ENCODE measurements at regions of chr11 and their contacts with region 1.

Region 1: DNA sequence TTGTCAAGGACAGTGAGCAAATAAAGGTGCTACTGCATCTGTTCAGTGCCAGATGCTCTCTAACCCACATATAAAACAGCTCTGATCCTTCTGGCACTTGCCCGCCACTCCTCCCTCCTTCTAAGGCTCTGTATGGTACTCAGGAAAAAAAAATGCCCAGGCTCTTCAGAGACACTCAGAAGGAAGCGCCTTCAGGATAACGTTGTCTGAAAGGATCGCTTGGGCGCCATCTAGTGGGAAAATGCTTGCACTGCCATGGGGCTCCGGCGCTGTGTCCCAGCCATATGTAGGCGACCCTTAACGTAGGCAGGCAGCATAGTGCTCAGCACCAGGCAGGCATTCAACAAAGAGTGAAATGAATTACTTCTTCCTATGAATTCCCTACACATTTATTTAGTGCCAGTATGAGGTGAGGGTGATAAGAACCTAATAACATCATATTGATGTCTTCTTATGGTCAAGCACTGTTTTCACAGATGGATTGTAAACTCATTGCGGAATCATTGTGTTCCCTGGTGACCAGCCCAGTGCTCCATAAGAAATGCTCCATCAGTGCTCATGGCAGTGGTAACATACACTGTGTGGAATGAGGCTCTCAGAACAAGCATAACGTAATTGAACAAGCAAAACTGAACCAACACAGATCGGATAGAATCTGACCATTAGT is 39.6 kb downstream of the PAMR1 start:
- DNase-seq: peak; percentile 10 to 84
- H3K4me3 ChIP-seq: no peak overlapping the region
- H3K27ac ChIP-seq: no peak overlapping the region
- H3K4me1 ChIP-seq: no peaks in the 10 kb centered on the region
- H3K27me3 ChIP-seq: no peaks in the 10 kb centered on the region
- CTCF ChIP-seq: peak; percentile 64 to 93 (median 89)

Region 2: DNA sequence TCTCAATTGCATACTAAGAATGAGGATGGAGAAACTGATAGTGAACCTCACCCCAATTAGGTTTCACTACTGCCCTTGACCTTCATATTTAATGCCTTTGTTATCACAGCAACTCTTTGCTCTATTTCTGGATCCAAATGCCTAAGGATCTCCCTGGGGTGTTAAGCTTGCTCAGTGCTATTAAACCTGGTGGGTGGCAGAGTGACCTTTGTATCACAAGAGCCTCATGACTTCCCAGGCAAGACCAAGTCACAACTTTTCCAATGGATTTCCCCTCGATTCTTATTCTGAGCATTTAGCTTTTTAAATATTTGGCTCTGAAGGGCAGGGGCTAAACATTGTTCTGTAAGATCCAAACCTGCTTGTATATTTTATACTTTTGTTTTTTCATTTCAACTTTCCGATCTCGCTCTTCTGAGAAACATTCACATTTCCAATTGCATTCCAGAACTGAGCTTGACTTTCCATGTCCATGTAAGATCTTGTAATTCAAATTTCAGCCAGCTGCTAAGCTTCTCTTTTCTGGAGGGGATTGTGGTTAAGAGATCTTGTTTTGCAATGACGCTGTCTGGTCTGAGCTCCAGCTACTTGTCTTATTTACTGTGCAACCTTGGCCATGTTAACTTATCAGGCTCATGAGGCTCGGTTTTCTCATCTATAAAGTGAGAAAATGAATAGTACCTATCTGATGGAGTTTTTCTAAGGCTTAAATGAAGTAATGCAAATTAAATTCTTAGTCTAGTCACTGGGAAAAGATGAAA is 871.3 kb before region 1 on chr11:
- intact Hi-C with region 1: no loop called
- DNase-seq: no peak
- H3K4me3 ChIP-seq: no peak overlapping the region
- H3K27ac ChIP-seq: no peak overlapping the region
- H3K4me1 ChIP-seq: no peaks in the 10 kb centered on the region
- H3K27me3 ChIP-seq: no peaks in the 10 kb centered on the region
- CTCF ChIP-seq: no peak

Region 3: DNA sequence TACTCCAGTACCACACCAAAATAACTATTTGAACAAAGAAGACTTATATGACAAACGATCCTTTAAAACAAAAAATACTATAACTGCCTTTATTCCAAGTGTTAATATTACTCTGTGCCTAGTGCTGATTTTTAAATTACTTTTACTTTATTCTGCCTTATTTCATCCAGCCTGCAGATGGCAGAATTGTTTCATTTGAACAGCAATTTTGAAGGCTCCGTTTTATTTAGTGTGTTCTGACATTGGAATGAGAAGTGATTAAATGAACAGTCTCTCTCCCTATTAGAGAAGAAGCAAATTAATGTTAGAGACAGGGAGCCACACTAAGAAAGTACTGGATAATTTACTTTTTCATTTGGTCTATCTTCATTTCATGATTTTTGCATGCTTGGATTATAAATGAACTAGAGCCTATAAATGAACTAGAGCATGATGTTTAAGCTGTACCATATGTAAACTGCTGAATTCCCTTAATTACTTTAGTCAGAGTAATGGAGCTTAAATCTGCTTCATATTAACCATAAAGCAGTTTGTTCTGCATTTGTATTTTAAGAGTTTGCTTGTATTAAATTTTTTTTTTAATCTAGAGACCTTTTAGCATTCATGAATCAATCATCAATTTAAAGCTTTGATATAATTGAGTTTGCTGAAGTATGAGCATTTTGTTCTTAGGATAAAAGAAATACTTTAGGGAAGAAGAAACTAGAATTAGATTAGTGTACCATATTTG is 559.5 kb before region 1 on chr11:
- intact Hi-C with region 1: loop called (anchors 1 kb)
- DNase-seq: no peak
- H3K4me3 ChIP-seq: no peak overlapping the region
- H3K27ac ChIP-seq: no peak overlapping the region
- H3K4me1 ChIP-seq: peaks cover 6 to 7% of the 10 kb centered on the region in 2 donors
- H3K27me3 ChIP-seq: no peaks in the 10 kb centered on the region
- CTCF ChIP-seq: peak; percentile 49 to 80 (median 51)

Region 4: DNA sequence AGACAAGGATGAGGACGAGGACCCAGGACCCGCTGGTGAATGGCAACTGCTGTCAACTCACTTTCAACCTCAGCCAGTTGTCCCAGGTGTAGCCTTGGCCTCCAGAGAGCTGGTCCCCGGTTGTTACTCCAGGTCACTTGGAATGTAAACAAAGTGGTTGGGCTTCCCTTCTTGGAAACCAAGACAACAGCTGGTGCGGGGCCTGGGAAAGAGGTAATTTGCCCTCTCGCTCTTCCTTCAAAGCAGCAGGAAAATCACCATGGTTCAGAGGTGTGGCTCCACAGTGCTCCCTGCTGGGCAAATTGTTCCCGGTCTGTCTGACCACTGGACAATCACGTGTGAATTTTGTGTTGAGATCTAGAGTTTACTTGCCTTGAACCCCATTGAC is 81.4 kb before region 1 on chr11:
- intact Hi-C with region 1: loop called (anchors 5 kb)
- DNase-seq: no peak
- H3K4me3 ChIP-seq: no peak overlapping the region
- H3K27ac ChIP-seq: no peak overlapping the region
- H3K4me1 ChIP-seq: no peaks in the 10 kb centered on the region
- H3K27me3 ChIP-seq: no peaks in the 10 kb centered on the region
- CTCF ChIP-seq: peak in 2 of 3 experiments; percentile 44 to 56